ENCODE measurements at regions of chr11 and their contacts with region 1.

Region 1: DNA sequence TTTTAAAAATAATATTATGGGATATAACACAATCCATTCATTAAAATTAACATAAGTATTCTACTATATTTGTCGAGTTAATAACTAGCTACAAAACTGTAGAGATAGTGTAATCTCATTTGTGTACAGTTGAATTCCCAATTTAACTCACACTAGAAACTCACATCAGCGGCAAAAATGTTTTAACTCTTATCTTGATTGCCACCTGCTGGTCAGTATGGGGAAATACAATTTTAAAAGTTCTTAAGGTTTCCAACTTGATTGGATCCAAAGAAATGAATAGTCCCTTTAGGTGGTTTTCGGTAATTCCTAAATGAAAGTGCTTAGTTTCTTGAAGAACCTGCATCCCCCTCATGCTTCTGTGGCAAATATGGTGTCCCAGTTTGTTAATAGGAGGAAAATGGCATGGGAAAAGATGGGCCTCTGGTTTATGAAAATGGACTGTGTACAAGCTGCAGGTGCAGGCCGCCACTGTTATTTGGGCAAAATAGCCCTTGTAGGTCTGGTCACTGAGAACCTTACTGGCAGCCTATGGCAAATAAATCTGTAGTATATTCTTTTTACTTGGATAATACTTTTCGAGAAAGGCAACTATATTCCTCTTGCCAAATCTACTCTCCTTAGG is 33.7 kb upstream of the SLC17A6 start:
- DNase-seq: peak; percentile 44
- H3K4me3 ChIP-seq: no peak overlapping the region
- H3K27ac ChIP-seq: no peak overlapping the region
- H3K4me1 ChIP-seq: no peaks in the 10 kb centered on the region; a peak in 1 of 4 replicates
- H3K27me3 ChIP-seq: no peaks in the 10 kb centered on the region
- CTCF ChIP-seq: peak; percentile 75
- EP300 ChIP-seq: no peak
- RAD21 ChIP-seq: peak; percentile 80

Region 2: DNA sequence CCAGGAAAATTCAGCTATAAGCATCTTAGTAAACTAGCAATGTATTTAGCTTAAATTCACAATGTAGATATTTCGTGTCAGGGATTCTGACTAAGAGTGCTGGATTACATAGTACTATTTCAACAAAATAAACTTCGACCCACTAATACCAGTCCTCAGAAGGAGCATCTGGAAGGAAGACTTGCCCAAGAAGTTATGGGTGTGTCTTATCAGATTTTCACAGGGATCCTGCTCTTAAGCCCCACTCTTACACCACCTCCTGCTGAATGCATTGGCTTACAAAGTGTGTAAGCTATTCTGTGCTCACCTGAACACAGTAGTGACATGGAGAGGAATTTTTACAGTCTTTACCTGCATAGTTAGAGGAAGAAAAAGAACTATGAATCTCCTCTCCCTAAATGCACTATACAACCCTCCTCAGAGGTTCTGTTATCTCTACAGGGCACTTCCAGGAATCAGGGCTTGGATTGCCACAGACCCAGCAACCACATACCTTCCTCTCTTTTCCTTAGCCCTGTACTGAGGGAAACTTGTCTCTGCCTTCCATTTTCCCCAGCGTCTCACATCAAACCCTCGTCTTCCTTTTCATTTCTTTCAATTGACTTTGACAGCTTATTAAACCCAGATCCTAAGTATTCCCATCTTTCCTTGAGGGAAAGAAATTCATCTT is 146.8 kb before region 1 on chr11:
- CTCF ChIA-PET with region 1: interaction called, 10 read pairs
- POLR2A ChIA-PET with region 1: no interaction called
- DNase-seq: no peak
- H3K4me3 ChIP-seq: no peak overlapping the region
- H3K27ac ChIP-seq: no peak overlapping the region
- H3K4me1 ChIP-seq: no peaks in the 10 kb centered on the region
- H3K27me3 ChIP-seq: no peaks in the 10 kb centered on the region
- CTCF ChIP-seq: no peak
- EP300 ChIP-seq: no peak
- RAD21 ChIP-seq: no peak

Region 3: GRCh38 chr11:22163394-22163797 is 141.1 kb before region 1 on chr11:
- CTCF ChIA-PET with region 1: interaction called, 104 read pairs
- POLR2A ChIA-PET with region 1: no interaction called
- DNase-seq: no peak
- H3K4me3 ChIP-seq: no peak overlapping the region
- H3K27ac ChIP-seq: no peak overlapping the region
- H3K4me1 ChIP-seq: peaks cover 0 to 4% of the 10 kb centered on the region in 2 experiments; a peak in 2 of 4 replicates
- H3K27me3 ChIP-seq: no peaks in the 10 kb centered on the region
- CTCF ChIP-seq: no peak
- EP300 ChIP-seq: no peak
- RAD21 ChIP-seq: no peak

Region 4: GRCh38 chr11:22169833-22170232 is 134.6 kb before region 1 on chr11:
- CTCF ChIA-PET with region 1: interaction called, 104 read pairs
- POLR2A ChIA-PET with region 1: no interaction called
- DNase-seq: no peak
- H3K4me3 ChIP-seq: no peak overlapping the region
- H3K27ac ChIP-seq: no peak overlapping the region
- H3K4me1 ChIP-seq: no peaks in the 10 kb centered on the region; a peak in 1 of 4 replicates
- H3K27me3 ChIP-seq: no peaks in the 10 kb centered on the region
- CTCF ChIP-seq: peak; percentile 62
- EP300 ChIP-seq: no peak
- RAD21 ChIP-seq: peak; percentile 63

Region 5: GRCh38 chr11:22244986-22245592 is 59.4 kb before region 1 on chr11:
- CTCF ChIA-PET with region 1: interaction called, 49 read pairs
- POLR2A ChIA-PET with region 1: no interaction called
- DNase-seq: peak; percentile 18
- H3K4me3 ChIP-seq: no peak overlapping the region
- H3K27ac ChIP-seq: no peak overlapping the region
- H3K4me1 ChIP-seq: no peaks in the 10 kb centered on the region
- H3K27me3 ChIP-seq: no peaks in the 10 kb centered on the region
- CTCF ChIP-seq: peak; percentile 69
- EP300 ChIP-seq: no peak
- RAD21 ChIP-seq: peak; percentile 72

Region 6: DNA sequence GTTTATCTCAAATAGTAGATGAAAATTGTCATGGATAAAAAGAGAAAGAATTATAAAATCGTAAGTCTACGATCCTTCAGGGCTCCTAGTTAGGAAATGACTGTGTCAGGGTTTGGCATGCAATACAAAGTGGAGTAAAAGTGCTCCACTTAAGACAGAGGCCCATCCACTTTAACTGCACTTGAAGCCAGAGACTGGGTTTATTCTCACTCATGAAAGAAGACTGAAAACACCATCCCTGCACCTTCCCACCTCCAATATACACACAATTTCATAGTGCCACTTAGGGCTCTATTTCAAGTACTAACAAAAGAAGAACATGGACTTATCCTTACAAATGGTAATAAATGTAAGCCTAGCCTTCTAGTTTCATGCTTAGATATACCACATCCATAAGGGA is 40.8 kb before region 1 on chr11:
- CTCF ChIA-PET with region 1: no interaction called
- POLR2A ChIA-PET with region 1: no interaction called
- DNase-seq: no peak
- H3K4me3 ChIP-seq: no peak overlapping the region
- H3K27ac ChIP-seq: no peak overlapping the region
- H3K4me1 ChIP-seq: no peaks in the 10 kb centered on the region
- H3K27me3 ChIP-seq: no peaks in the 10 kb centered on the region
- CTCF ChIP-seq: no peak
- EP300 ChIP-seq: no peak
- RAD21 ChIP-seq: no peak

Region 7: DNA sequence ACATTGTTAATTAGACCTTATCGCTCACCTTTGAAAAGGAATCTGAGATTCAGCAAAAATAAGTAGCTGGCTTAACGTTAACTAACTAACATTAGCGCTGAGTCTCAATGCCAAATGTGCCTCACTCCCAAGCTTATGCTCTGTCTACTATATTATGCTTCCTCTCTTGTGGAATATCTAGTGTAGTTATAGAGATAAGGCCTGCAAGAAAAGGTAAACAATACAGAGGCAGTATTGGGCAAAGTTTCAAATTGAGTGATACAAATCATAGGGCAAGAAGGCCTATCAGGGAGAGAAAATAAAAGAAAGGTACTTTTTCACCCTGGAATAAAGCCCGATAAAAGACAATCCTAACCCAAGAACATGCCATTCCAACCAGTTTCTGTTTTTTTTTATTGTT is 27.9 kb before region 1 on chr11:
- CTCF ChIA-PET with region 1: interaction called, 10 read pairs
- POLR2A ChIA-PET with region 1: no interaction called
- DNase-seq: no peak
- H3K4me3 ChIP-seq: no peak overlapping the region
- H3K27ac ChIP-seq: no peak overlapping the region
- H3K4me1 ChIP-seq: no peaks in the 10 kb centered on the region; a peak in 2 of 4 replicates
- H3K27me3 ChIP-seq: no peaks in the 10 kb centered on the region
- CTCF ChIP-seq: no peak
- EP300 ChIP-seq: no peak
- RAD21 ChIP-seq: no peak

Region 8: GRCh38 chr11:22317656-22318055 is 13.2 kb after region 1 on chr11:
- CTCF ChIA-PET with region 1: interaction called, 21 read pairs
- POLR2A ChIA-PET with region 1: no interaction called
- DNase-seq: no peak
- H3K4me3 ChIP-seq: no peak overlapping the region
- H3K27ac ChIP-seq: no peak overlapping the region
- H3K4me1 ChIP-seq: no peaks in the 10 kb centered on the region
- H3K27me3 ChIP-seq: no peaks in the 10 kb centered on the region
- CTCF ChIP-seq: no peak
- EP300 ChIP-seq: no peak
- RAD21 ChIP-seq: no peak

Region 9: GRCh38 chr11:22432291-22433093 is 128.0 kb after region 1 on chr11:
- CTCF ChIA-PET with region 1: no interaction called
- POLR2A ChIA-PET with region 1: no interaction called
- DNase-seq: peak; percentile 7
- H3K4me3 ChIP-seq: no peak overlapping the region
- H3K27ac ChIP-seq: no peak overlapping the region
- H3K4me1 ChIP-seq: no peaks in the 10 kb centered on the region
- H3K27me3 ChIP-seq: no peaks in the 10 kb centered on the region
- CTCF ChIP-seq: no peak
- EP300 ChIP-seq: no peak
- RAD21 ChIP-seq: no peak